AG04450 (cell line): ENCODE measurements at regions of chr21 and their contacts with region 1.

Region 1: DNA sequence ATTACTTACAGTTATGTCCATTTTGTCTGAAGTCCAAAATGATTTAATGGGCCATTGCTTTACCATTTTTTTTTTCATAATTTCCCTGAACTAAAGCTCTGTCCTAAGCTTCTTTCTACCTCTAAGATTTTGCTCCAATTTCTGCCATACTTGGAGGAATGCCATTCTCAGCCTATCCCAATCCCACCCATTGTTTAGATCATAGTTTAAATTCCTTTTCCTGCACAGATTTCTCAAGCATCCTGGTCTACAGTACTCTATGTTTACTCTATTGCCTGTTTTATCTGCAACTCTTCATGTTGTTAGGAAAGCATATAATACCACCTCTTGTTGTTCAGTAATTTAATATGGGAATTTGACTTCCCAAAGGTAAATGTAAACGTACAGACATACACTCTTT is 30.8 kb downstream of the ADAMTS1 start:
- DNase-seq: no peak
- H3K4me3 ChIP-seq: no peak overlapping the region
- H3K27ac ChIP-seq: no peak overlapping the region
- H3K27me3 ChIP-seq: no peaks in the 10 kb centered on the region
- CTCF ChIP-seq: no peak

Region 2: GRCh38 chr21:26769613-26770188 is 44.7 kb before region 1 on chr21:
- CTCF ChIA-PET with region 1: interaction called, 11 read pairs
- POLR2A ChIA-PET with region 1: no interaction called
- DNase-seq: peak; percentile 20
- H3K4me3 ChIP-seq: no peak overlapping the region
- H3K27ac ChIP-seq: no peak overlapping the region
- H3K27me3 ChIP-seq: no peaks in the 10 kb centered on the region
- CTCF ChIP-seq: peak; percentile 66

Region 3: DNA sequence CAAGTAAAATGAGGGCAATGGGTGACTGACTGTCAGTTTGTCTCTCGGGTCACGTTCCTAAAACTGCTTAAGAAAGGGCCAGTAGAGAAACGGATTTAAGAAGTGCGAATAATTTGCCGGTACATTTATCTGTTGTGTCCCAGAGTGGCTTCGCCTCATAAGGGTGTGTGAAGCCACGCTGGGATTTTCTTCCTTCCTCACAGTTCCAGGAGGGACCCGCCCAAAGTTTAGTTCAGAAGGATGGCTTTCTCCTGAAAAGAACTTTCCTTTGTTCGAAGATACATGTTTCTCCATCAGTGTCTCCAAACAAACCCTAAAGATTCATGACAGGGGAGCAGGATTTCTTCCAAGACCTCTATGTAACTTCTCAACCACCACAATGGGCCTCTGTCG is 19.0 kb before region 1 on chr21:
- CTCF ChIA-PET with region 1: no interaction called
- POLR2A ChIA-PET with region 1: no interaction called
- DNase-seq: no peak
- H3K4me3 ChIP-seq: no peak overlapping the region
- H3K27ac ChIP-seq: peak overlapping the region; percentile 49
- H3K27me3 ChIP-seq: no peaks in the 10 kb centered on the region
- CTCF ChIP-seq: no peak

Region 4: GRCh38 chr21:26826801-26827200 is 12.4 kb after region 1 on chr21:
- CTCF ChIA-PET with region 1: interaction called, 10 read pairs
- POLR2A ChIA-PET with region 1: interaction called, 3 read pairs
- DNase-seq: no peak
- H3K4me3 ChIP-seq: no peak overlapping the region
- H3K27ac ChIP-seq: no peak overlapping the region
- H3K27me3 ChIP-seq: no peaks in the 10 kb centered on the region
- CTCF ChIP-seq: no peak

Region 5: GRCh38 chr21:26834181-26834945 is 20.0 kb after region 1 on chr21:
- CTCF ChIA-PET with region 1: interaction called, 10 read pairs
- POLR2A ChIA-PET with region 1: interaction called, 3 read pairs
- DNase-seq: no peak
- H3K4me3 ChIP-seq: no peak overlapping the region
- H3K27ac ChIP-seq: no peak overlapping the region
- H3K27me3 ChIP-seq: no peaks in the 10 kb centered on the region
- CTCF ChIP-seq: peak; percentile 49

Region 6: DNA sequence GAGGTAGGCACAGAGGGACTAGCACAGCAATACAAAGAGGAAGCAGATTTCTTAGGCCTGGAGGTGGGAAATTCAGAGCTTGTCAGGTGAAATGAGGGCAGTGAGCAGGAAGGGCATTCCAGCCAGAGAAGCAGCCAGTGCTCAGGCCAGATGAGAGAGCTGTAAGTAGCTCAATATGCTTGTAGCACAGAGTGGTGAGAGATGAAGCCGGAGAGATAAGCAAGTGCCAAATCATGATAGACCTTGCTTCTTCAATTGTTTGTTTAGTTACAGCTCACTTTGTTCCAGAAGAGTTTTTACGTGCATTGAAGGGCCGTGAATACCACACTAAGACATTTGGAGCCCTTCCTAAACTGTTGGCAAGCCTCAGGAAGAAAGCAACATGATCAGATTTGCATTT is 72.9 kb after region 1 on chr21:
- CTCF ChIA-PET with region 1: no interaction called
- POLR2A ChIA-PET with region 1: no interaction called
- DNase-seq: no peak
- H3K4me3 ChIP-seq: no peak overlapping the region
- H3K27ac ChIP-seq: no peak overlapping the region
- H3K27me3 ChIP-seq: no peaks in the 10 kb centered on the region
- CTCF ChIP-seq: no peak